Ascending aorta (tissue), 2 donors: ENCODE measurements at regions of chr5 and their contacts with region 1.

Region 1: GRCh38 chr5:83927140-83927733 is 206.6 kb upstream of the HAPLN1 start:
- DNase-seq: peak in 1 of 2 donors; percentile 71
- H3K4me3 ChIP-seq: no peak overlapping the region
- H3K27ac ChIP-seq: no peak overlapping the region
- H3K4me1 ChIP-seq: no peaks in the 10 kb centered on the region
- H3K27me3 ChIP-seq: no peaks in the 10 kb centered on the region
- CTCF ChIP-seq: peak; percentile 33 to 72 (median 47)

Region 2: DNA sequence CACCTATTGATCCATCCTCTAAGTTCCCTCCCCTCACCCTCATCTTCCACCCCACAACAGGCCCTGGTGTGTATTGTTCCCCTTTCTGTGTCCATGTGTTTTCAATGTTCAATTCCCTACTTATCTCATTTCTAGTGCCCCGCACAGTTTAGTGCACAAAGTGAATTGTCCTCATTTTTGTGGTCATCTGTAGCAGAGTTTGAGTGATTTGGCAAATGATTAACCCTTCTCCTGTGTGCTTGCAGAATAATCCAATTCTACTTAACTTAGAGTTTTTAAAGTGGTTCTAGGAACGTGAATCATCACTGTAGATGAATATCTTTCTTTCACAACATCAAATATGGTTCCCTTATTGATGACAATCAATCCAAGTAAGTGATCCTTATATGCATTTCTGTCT is 200.3 kb before region 1 on chr5:
- intact Hi-C with region 1: loop called (anchors 5 kb)
- DNase-seq: no peak
- H3K4me3 ChIP-seq: no peak overlapping the region
- H3K27ac ChIP-seq: no peak overlapping the region
- H3K4me1 ChIP-seq: no peaks in the 10 kb centered on the region
- H3K27me3 ChIP-seq: no peaks in the 10 kb centered on the region
- CTCF ChIP-seq: no peak

Region 3: GRCh38 chr5:84255315-84255714 is 328.1 kb after region 1 on chr5:
- intact Hi-C with region 1: loop called (anchors 10 kb)
- DNase-seq: no peak
- H3K4me3 ChIP-seq: no peak overlapping the region
- H3K27ac ChIP-seq: peak overlapping the region in 1 of 2 donors; percentile 9
- H3K4me1 ChIP-seq: peaks cover 0 to 3% of the 10 kb centered on the region in 2 donors
- H3K27me3 ChIP-seq: no peaks in the 10 kb centered on the region
- CTCF ChIP-seq: peak in 2 of 3 experiments; percentile 17 to 44